ENCODE measurements at regions of chr5 and their contacts with region 1.

Region 1: DNA sequence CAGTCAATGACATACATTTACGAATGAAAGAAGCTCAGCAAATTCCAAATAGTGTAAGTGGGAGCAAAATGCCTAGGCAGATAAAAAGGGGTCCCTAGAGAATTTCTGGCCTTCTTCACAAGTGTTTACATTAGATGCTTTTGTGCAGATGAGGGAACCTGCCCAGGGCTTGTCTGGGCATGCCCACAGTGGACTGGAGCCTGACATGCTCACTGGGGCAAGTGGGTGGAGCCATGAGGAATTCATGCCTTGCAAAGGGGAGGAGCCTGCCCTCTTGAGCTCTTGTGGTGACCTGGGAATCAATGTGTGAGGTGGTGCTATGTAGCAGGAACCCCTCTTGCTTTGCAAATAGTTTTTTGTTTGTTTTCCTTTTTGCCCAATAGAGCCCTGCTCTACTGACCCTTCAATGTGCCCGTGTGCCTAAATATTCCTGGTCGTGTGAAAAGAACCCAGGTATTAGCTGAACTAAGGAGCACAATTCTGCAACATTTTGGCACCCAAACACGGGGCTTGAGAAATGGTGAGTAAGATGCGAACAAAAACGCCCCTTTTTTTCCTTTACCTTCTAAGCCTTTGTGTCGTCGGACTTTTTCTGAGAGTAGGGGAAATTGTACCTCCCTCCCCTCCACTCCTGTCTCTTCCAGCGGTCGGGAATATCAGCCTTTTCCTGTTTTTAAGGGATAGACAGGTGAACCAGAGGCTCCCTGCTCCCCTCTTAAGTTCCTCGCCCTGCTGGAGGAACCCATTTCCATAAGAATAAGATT is 433.8 kb upstream of the CDH9 start:
- DNase-seq: peak; percentile 19
- ATAC-seq: peak; percentile 97
- H3K4me3 ChIP-seq: peak overlapping the region; percentile 57; the same call in 1 of the 2 replicates
- H3K27ac ChIP-seq: no peak overlapping the region
- H3K4me1 ChIP-seq: no peaks in the 10 kb centered on the region
- H3K27me3 ChIP-seq: no peaks in the 10 kb centered on the region
- CTCF ChIP-seq: no peak
- POLR2A ChIP-seq: no peak
- RAD21 ChIP-seq: no peak

Region 2: GRCh38 chr5:27241569-27242251 is 230.5 kb before region 1 on chr5:
- CTCF ChIA-PET with region 1: no interaction called
- POLR2A ChIA-PET with region 1: no interaction called
- dilution Hi-C with region 1: no loop called
- in situ Hi-C with region 1: no loop called
- intact Hi-C with region 1: loop called (anchors 5 kb)
- DNase-seq: peak; percentile 97
- ATAC-seq: peak; percentile 93
- H3K4me3 ChIP-seq: no peak overlapping the region
- H3K27ac ChIP-seq: peak overlapping the region; percentile 82
- H3K4me1 ChIP-seq: peaks cover 4% of the 10 kb centered on the region; the same call in 1 of the 2 replicates
- H3K27me3 ChIP-seq: no peaks in the 10 kb centered on the region
- CTCF ChIP-seq: peak; percentile 56
- POLR2A ChIP-seq: no peak
- RAD21 ChIP-seq: peak; percentile 41

Region 3: GRCh38 chr5:27450607-27451006 is 21.6 kb before region 1 on chr5:
- CTCF ChIA-PET with region 1: no interaction called
- POLR2A ChIA-PET with region 1: no interaction called
- dilution Hi-C with region 1: no loop called
- in situ Hi-C with region 1: no loop called
- intact Hi-C with region 1: no loop called
- DNase-seq: peak; percentile 4
- ATAC-seq: no peak
- H3K4me3 ChIP-seq: no peak overlapping the region
- H3K27ac ChIP-seq: no peak overlapping the region
- H3K4me1 ChIP-seq: no peaks in the 10 kb centered on the region
- H3K27me3 ChIP-seq: no peaks in the 10 kb centered on the region
- CTCF ChIP-seq: no peak
- POLR2A ChIP-seq: no peak
- RAD21 ChIP-seq: no peak